Astrocyte of the cerebellum (primary cell): ENCODE measurements at regions of chr18 and their contacts with region 1.

Region 1: DNA sequence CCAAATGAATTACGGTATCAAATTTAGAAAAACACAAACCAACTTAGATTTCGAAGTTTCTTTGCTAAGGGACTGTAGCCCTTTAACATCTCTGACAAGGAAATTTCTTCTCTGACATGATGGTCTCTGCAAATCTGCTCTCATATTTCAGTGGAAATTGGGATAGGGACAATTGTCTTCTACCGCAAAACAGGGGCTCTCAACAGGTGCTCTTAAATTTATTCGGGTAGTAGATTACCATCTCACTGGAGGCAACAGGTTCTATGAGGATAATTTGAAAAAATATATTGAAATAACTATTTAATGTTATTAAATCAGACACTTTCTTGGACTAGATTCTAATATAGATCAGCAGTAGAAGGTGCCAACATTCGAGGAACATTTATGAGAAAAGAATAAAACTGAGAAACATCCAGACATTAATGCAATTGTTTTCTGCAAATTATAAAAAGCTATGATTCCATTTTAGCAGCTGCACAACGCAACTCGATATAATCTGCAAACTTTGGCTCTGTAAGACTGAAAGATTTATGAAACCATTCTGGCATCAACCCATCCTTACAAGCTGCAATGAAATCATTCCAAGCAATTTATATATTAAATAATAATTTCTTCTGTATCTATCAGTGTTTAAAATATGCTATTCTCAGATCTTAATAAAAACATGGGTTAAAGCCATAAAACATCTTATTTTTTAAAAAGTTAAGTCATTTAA is 10.0 kb upstream of the BCL2 start:
- DNase-seq: no peak
- H3K4me3 ChIP-seq: no peak overlapping the region
- CTCF ChIP-seq: no peak

Region 2: DNA sequence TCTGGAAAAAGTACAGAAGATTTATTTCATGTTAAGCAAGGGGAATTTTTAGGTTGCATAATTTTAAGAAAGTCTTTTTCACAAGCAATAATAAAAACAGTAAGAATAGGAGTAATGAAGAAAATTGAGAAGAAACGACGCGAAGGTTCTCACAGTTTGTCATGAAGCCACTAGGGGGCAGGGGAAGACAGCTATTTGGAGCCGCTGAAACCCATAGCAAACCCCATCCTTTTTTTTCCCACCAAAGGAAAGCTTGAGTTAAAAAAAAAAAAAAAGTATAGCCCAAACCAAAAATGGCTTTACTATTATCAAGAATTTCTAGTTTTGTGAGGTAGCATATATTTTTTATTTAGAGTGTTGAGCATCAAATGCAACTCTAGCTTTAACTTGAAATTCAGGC is 313.3 kb before region 1 on chr18:
- in situ Hi-C with region 1: loop called (anchors 5 kb)
- DNase-seq: peak; percentile 57
- H3K4me3 ChIP-seq: no peak overlapping the region
- CTCF ChIP-seq: peak; percentile 83

Region 3: GRCh38 chr18:63111671-63112402 is 217.8 kb before region 1 on chr18:
- in situ Hi-C with region 1: loop called (anchors 5 kb)
- DNase-seq: no peak
- H3K4me3 ChIP-seq: no peak overlapping the region
- CTCF ChIP-seq: no peak